Activated naive CD8-positive, alpha-beta T cell treated with anti-CD3 and anti-CD28 coated beads, Interleukin-2, amount 10 ng/mL, durations not matched to agents 7 days and 5 days (primary cell): ENCODE measurements at regions of chr6 and their contacts with region 1.

Region 1: GRCh38 chr6:89080542-89081422 is at the start of gene PNRC1:
- DNase-seq: peak; percentile 100
- ATAC-seq: peak; percentile 65
- H3K4me3 Mint-ChIP-seq: peak within 1 kb of the TSS; percentile 92
- H3K27ac Mint-ChIP-seq: peak within 1 kb of the TSS; percentile 98
- H3K4me1 Mint-ChIP-seq: peaks cover 25% of the 10 kb centered on the region
- H3K27me3 Mint-ChIP-seq: no peaks in the 10 kb centered on the region
- total RNA-seq, gene PNRC1: 233 to 264 TPM

Region 2: GRCh38 chr6:88963139-88964090 is 117.4 kb before region 1 on chr6 and contains the start of gene RNGTT:
- POLR2A ChIA-PET with region 1: interaction called, 19 read pairs
- DNase-seq: peak; percentile 97
- ATAC-seq: peak; percentile 99
- H3K4me3 Mint-ChIP-seq: peak within 1 kb of the TSS; percentile 99
- H3K27ac Mint-ChIP-seq: peak within 1 kb of the TSS; percentile 89
- H3K4me1 Mint-ChIP-seq: peaks cover 26% of the 10 kb centered on the region
- H3K27me3 Mint-ChIP-seq: no peaks in the 10 kb centered on the region
- total RNA-seq, gene RNGTT: 19.9 to 20.1 TPM

Region 3: GRCh38 chr6:88975369-88975768 is 105.4 kb before region 1 on chr6:
- POLR2A ChIA-PET with region 1: no interaction called
- DNase-seq: no peak
- ATAC-seq: no peak
- H3K4me3 Mint-ChIP-seq: no peak overlapping the region
- H3K27ac Mint-ChIP-seq: no peak overlapping the region
- H3K4me1 Mint-ChIP-seq: no peaks in the 10 kb centered on the region
- H3K27me3 Mint-ChIP-seq: peaks cover 10% of the 10 kb centered on the region

Region 4: GRCh38 chr6:89009624-89010059 is 71.1 kb before region 1 on chr6:
- POLR2A ChIA-PET with region 1: interaction called, 17 read pairs
- DNase-seq: no peak
- ATAC-seq: no peak
- H3K4me3 Mint-ChIP-seq: no peak overlapping the region
- H3K27ac Mint-ChIP-seq: no peak overlapping the region
- H3K4me1 Mint-ChIP-seq: peaks cover 5% of the 10 kb centered on the region
- H3K27me3 Mint-ChIP-seq: no peaks in the 10 kb centered on the region

Region 5: DNA sequence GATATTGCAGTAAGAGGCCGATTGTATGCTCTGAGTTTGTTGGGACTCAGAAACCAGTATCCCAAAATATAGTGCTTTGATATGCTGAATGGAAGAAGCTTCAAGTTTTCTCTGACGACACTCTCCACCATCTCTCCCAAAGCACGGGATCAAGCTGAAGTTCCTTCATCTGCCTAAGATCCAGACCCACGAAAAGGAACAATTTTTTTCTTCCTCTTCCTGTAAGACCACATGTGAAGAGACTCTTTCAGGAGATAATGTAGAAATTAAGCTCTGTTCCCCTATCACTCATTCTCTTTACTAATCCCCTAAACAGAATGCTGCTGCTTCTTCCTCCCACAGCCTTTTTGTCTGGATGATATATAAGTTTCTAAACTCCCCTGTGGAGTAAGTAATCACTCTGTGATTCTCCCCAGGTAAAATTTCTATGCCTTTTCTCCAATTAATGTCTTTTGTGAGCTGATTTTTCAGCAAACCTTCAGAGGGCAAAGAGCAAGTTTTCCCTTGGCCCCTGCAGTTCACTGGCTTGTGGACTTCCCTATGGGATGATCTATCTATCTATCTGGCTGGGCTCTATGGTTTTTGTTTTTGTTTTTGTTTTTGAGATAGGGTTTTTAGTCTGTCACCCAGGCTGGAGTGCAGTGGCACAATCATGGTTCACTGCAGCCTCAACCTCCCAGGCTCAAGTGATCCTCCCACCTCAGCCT is 13.7 kb before region 1 on chr6:
- POLR2A ChIA-PET with region 1: interaction called, 27 read pairs
- DNase-seq: no peak
- ATAC-seq: no peak
- H3K4me3 Mint-ChIP-seq: no peak overlapping the region
- H3K27ac Mint-ChIP-seq: no peak overlapping the region
- H3K4me1 Mint-ChIP-seq: peaks cover 1% of the 10 kb centered on the region
- H3K27me3 Mint-ChIP-seq: peaks cover 7% of the 10 kb centered on the region

Region 6: DNA sequence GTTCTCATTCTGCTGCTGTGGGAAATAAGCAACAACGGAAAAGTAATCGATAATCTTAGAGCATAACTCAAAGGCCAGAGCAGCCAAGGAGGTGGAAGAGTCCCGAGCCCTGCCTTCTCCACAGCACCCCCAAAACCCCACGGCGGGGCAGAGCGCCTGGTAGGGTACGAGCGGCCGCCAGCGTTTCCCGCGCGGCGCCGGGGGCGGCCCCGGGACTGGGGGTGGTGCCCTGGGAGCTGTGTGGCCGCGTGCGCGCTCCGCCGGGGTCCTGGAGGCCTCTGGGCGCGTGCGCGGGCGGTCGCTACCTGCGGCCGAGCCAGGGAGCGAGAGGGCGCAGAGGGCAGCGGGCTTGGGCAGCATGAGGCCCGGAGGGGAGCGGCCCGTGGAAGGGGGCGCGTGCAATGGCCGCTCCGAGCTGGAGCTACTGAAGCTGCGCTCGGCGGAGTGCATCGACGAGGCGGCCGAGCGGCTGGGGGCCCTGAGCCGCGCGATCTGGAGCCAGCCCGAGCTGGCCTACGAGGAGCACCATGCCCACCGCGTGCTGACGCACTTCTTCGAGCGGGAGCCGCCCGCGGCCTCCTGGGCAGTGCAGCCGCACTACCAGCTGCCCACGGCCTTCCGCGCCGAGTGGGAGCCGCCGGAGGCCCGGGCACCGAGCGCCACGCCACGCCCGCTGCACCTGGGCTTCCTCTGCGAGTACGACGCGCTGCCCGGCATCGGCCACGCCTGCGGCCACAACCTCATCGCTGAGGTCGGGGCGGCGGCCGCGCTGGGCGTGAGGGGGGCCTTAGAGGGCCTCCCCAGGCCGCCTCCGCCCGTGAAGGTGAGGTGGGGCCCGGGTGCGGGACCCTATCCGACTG is 65.2 kb after region 1 on chr6 and contains the start of gene PM20D2:
- POLR2A ChIA-PET with region 1: interaction called, 103 read pairs
- DNase-seq: peak; percentile 85
- ATAC-seq: peak; percentile 81
- H3K4me3 Mint-ChIP-seq: peak within 1 kb of the TSS; percentile 91
- H3K27ac Mint-ChIP-seq: peak within 1 kb of the TSS; percentile 97
- H3K4me1 Mint-ChIP-seq: peaks cover 35% of the 10 kb centered on the region
- H3K27me3 Mint-ChIP-seq: peaks cover 6% of the 10 kb centered on the region
- total RNA-seq, gene PM20D2: 18.9 to 20.6 TPM